GM23248 (cell line): ENCODE measurements at regions of chr11 and their contacts with region 1.

Region 1: GRCh38 chr11:107583629-107584195 is 7.2 kb upstream of the ELMOD1 start:
- DNase-seq: peak; percentile 79
- H3K4me3 ChIP-seq: no peak overlapping the region
- H3K27ac ChIP-seq: no peak overlapping the region
- H3K4me1 ChIP-seq: peaks cover 22% of the 10 kb centered on the region
- H3K27me3 ChIP-seq: no peaks in the 10 kb centered on the region; the same call in 1 of the 2 replicates

Region 2: GRCh38 chr11:107157146-107157808 is 426.4 kb before region 1 on chr11:
- in situ Hi-C with region 1: no loop called
- DNase-seq: no peak
- H3K4me3 ChIP-seq: no peak overlapping the region
- H3K27ac ChIP-seq: no peak overlapping the region
- H3K4me1 ChIP-seq: no peaks in the 10 kb centered on the region
- H3K27me3 ChIP-seq: 0 out of 2 replicates have a peak, but pooled peaks cover 5% of the 10 kb centered on the region

Region 3: DNA sequence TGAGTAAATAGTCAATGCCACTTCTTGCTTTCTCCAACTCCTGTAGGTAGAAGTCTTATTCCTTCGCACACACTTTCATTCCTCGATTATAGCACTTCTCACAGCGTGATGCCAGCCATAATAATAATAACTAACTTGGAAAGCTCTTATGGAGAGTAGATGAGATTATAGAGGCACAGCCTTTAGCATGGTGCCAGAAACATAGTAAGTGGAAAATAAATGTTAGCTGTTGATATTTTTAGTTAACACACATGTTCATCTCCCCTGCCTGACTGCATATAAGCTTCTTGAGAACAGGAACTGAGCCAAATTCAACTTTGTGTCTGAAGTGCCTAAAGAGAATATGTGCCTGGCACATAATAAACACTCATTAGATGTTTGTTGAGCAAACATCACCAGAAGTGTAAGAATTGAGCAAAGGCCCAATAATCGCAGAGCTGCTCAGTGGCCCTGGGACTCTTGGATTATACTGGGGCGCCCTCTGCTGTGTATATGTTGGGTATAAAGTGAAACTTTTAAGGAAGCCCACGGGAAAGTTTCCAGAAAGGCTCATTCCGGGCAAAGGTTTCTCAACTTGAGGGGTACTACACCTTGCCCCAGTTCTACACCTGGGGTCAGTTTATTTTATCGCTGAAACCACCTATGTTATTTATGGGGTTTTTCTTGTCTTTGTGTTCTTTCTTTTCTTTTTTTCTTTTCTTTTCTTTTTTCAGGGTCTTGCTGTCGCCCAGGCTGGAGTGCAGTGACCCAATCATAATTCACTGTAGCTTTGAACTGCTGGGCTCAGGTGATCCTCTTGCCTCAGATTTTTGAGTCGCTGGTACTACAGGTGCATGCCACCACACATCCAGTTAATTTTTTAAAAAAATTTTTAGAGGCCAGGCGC is 105.8 kb after region 1 on chr11:
- in situ Hi-C with region 1: loop called (anchors 5 kb)
- DNase-seq: peak; percentile 88
- H3K4me3 ChIP-seq: 0 out of 2 replicates have a peak overlapping the region, but pooled peaks have one; percentile 20
- H3K27ac ChIP-seq: no peak overlapping the region
- H3K4me1 ChIP-seq: peaks cover 13% of the 10 kb centered on the region
- H3K27me3 ChIP-seq: no peaks in the 10 kb centered on the region

Region 4: GRCh38 chr11:107770551-107770951 is 186.8 kb after region 1 on chr11:
- in situ Hi-C with region 1: loop called (anchors 10 kb)
- DNase-seq: peak; percentile 89
- H3K4me3 ChIP-seq: 0 out of 2 replicates have a peak overlapping the region, but pooled peaks have one; percentile 5
- H3K27ac ChIP-seq: peak overlapping the region; percentile 84
- H3K4me1 ChIP-seq: peaks cover 29% of the 10 kb centered on the region
- H3K27me3 ChIP-seq: no peaks in the 10 kb centered on the region